Pancreas (tissue), 10 donors: ENCODE measurements at regions of chr9 and their contacts with region 1.

Region 1: DNA sequence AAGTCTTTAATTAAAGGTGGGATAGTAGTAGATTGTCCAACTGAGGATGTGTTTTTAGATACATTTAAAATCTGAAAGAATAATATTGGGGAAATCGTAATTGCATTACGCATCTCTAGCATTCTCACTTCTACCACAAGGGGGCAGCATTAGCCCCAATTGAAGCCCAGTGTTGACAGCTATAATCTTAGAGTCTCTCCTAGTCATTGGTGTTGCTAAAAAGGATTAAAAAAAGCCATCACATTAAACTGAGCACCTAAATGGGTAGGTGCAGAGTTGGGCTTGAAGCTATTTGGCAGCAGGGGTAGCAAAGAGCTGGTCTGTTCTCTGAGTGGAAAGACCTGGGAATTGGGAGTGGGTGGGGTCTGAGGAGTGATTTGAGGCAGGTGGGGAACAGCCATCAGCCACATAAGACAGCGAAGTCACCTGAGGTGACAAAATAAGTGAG is 177.2 kb downstream of the OSTF1 start:
- DNase-seq: peak in 3 of 6 donors; percentile 11 to 48 (median 23)
- ATAC-seq: peak; percentile 56 to 83 (median 78)
- H3K4me3 ChIP-seq: no peak overlapping the region
- H3K27ac ChIP-seq: no peak overlapping the region
- H3K4me1 ChIP-seq: no peaks in the 10 kb centered on the region
- H3K27me3 ChIP-seq: no peaks in the 10 kb centered on the region
- CTCF ChIP-seq: peak; percentile 77 to 92 (median 89)

Region 2: DNA sequence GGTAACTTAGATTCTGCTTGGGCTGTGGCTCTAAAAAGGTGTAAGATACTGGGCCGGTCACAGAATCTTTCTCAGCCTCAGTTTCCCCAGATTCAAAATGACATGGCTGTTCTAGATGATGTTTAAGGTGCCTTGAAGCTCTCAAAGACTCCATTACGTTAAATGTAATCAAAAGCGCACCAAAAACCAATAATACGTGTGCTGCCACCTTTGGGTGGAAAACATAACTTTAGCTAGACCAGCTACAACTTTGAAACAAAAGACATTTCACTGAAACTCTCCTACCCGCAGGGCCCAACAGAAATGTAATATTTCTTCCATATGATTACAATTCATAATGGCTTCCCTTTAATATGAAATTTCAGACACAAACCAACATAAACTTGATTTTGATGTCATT is 590.0 kb after region 1 on chr9:
- intact Hi-C with region 1: loop called in 1 of 3 experiments (anchors 10 kb)
- DNase-seq: peak in 1 of 6 donors; percentile 12
- ATAC-seq: peak in 3 of 4 donors; percentile 58 to 74 (median 58)
- H3K4me3 ChIP-seq: no peak overlapping the region
- H3K27ac ChIP-seq: no peak overlapping the region
- H3K4me1 ChIP-seq: peaks cover 0 to 3% (median 0%) of the 10 kb centered on the region in 3 donors
- H3K27me3 ChIP-seq: no peaks in the 10 kb centered on the region
- CTCF ChIP-seq: peak in 2 of 4 donors; percentile 13 to 30

Region 3: GRCh38 chr9:76302947-76303940 is 1037.7 kb after region 1 on chr9:
- intact Hi-C with region 1: loop called in 1 of 3 experiments (anchors 10 kb)
- DNase-seq: peak in 1 of 6 donors; percentile 16
- ATAC-seq: peak; percentile 40 to 88 (median 80)
- H3K4me3 ChIP-seq: no peak overlapping the region
- H3K27ac ChIP-seq: no peak overlapping the region
- H3K4me1 ChIP-seq: peaks cover 0 to 4% (median 0%) of the 10 kb centered on the region in 3 donors
- H3K27me3 ChIP-seq: no peaks in the 10 kb centered on the region
- CTCF ChIP-seq: peak; percentile 33 to 57 (median 50)